Posterior cingulate gyrus (tissue), 11 donors: ENCODE measurements at regions of chr5 and their contacts with region 1.

Region 1: DNA sequence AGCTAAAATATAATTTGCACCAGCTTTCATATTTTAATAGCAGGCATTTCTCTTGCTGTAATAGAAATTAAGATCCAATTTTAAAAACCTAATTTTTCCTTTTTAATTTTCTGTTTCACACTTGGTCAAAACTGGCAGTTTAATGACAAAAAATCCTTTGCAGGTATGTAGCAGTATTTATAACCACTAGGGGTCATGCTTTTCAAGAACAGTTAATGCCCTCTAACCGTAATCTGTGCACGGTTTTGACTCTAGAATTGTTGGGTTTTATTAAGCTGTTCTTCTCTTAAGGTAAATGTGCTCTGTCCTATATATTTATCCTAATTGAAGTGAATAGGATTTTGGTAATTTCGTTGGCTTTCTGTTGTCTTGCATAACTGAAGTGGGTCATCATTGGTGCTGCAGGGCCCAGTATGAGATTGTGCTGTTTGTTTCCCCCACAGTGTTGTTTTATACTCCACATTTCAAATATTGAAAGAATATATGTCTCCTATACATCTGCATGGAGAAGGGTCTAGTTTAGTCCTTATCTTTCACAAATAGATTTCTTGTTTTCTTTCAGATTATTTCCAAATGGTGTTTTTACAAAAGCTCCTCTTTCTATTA is 107.4 kb downstream of the SCAMP1 start:
- DNase-seq: no peak

Region 2: GRCh38 chr5:78537821-78538220 is 70.0 kb after region 1 on chr5:
- intact Hi-C with region 1: loop called (anchors 10 kb)
- DNase-seq: peak in 3 of 10 donors; percentile 31 to 84 (median 34)